ENCODE measurements at regions of chr9 and their contacts with region 1.

Region 1: DNA sequence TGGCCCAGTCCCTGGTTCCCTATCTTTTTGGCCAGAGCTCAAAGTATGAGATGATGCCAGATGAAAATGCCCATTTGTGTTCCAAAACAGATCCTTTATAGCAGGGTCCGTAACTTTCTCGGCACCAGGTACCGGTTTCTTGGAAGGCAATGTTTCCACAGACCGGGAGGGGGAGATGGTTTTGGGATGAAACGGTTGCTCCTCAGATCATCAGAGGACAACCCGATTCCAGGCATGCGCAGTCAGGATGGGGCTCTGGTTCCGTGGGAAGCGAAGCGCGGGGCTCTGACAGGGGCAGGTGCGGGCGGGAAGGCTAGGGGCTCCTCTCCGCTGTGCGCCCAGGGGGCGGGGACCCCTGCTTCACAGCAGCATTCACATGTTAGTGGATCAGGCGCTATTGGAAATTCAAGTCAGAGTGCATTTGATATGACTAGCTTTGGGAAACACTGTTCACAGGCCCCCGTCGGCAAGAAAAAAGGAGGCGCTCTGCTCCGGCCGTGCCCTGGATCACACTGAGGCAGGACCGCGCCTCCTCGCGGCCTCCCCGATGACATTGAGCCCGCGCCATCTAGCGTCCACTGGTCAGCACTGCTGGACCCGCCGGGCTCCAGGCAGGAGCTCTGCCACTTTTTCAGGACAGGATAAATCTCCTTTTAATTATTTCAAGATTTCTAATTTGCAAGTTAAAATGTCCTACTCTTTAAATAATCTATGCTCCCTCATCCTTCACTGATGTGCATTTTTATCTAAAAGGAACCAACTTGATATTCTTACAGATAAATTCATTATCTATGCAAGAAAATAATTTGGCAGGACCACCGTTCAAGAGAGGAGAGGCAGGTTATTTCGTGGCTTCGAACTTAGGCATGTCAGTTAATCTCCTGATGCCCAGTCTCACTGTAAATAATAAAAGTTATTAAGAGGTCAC is 190.0 kb downstream of the FANCC start:
- DNase-seq: peak; percentile 53
- ATAC-seq: peak; percentile 94
- H3K4me3 ChIP-seq: no peak overlapping the region
- H3K27ac ChIP-seq: no peak overlapping the region
- H3K4me1 ChIP-seq: peaks cover 24% of the 10 kb centered on the region
- H3K27me3 ChIP-seq: no peaks in the 10 kb centered on the region
- CTCF ChIP-seq: peak; percentile 91
- EP300 ChIP-seq: no peak
- POLR2A ChIP-seq: no peak
- RAD21 ChIP-seq: peak; percentile 75

Region 2: GRCh38 chr9:94668418-94668932 is 459.0 kb before region 1 on chr9:
- CTCF ChIA-PET with region 1: interaction called, 6 read pairs
- POLR2A ChIA-PET with region 1: interaction called, 3 read pairs
- in situ Hi-C with region 1: no loop called
- intact Hi-C with region 1: loop called (anchors 5 kb)
- DNase-seq: no peak
- ATAC-seq: no peak
- H3K4me3 ChIP-seq: peak overlapping the region in 1 of 3 experiments; percentile 74; a peak in 1 of 6 replicates
- H3K27ac ChIP-seq: no peak overlapping the region
- H3K4me1 ChIP-seq: peaks cover 43% of the 10 kb centered on the region
- H3K27me3 ChIP-seq: no peaks in the 10 kb centered on the region; a peak in 1 of 5 replicates
- CTCF ChIP-seq: no peak
- EP300 ChIP-seq: no peak
- POLR2A ChIP-seq: no peak
- RAD21 ChIP-seq: no peak

Region 3: GRCh38 chr9:94681508-94681907 is 446.0 kb before region 1 on chr9:
- CTCF ChIA-PET with region 1: interaction called, 14 read pairs
- POLR2A ChIA-PET with region 1: no interaction called
- in situ Hi-C with region 1: loop called (anchors 5 kb)
- intact Hi-C with region 1: no loop called
- DNase-seq: peak; percentile 73
- ATAC-seq: peak; percentile 98
- H3K4me3 ChIP-seq: no peak overlapping the region
- H3K27ac ChIP-seq: no peak overlapping the region
- H3K4me1 ChIP-seq: peaks cover 19% of the 10 kb centered on the region
- H3K27me3 ChIP-seq: no peaks in the 10 kb centered on the region
- CTCF ChIP-seq: peak; percentile 93
- EP300 ChIP-seq: no peak; a peak in 1 of 4 replicates
- POLR2A ChIP-seq: no peak
- RAD21 ChIP-seq: peak; percentile 92

Measured in HepG2 (cell line).